PC-9 (cell line): ENCODE measurements at regions of chr11 and their contacts with region 1.

Region 1: GRCh38 chr11:17154409-17155159 is 53.2 kb downstream of the PIK3C2A start:
- DNase-seq: no peak
- H3K4me3 ChIP-seq: no peak overlapping the region
- H3K27ac ChIP-seq: no peak overlapping the region
- H3K4me1 ChIP-seq: no peaks in the 10 kb centered on the region
- H3K27me3 ChIP-seq: no peaks in the 10 kb centered on the region
- CTCF ChIP-seq: no peak

Region 2: GRCh38 chr11:16945671-16946469 is 208.7 kb before region 1 on chr11:
- CTCF ChIA-PET with region 1: no interaction called
- POLR2A ChIA-PET with region 1: interaction called, 10 read pairs
- intact Hi-C with region 1: no loop called
- DNase-seq: peak; percentile 58 to 73
- H3K4me3 ChIP-seq: no peak overlapping the region
- H3K27ac ChIP-seq: no peak overlapping the region; the same call in 1 of the 2 replicates
- H3K4me1 ChIP-seq: peaks cover 15% of the 10 kb centered on the region
- H3K27me3 ChIP-seq: no peaks in the 10 kb centered on the region
- CTCF ChIP-seq: peak; percentile 84

Region 3: GRCh38 chr11:17221968-17222367 is 67.4 kb after region 1 on chr11:
- CTCF ChIA-PET with region 1: no interaction called
- POLR2A ChIA-PET with region 1: no interaction called
- intact Hi-C with region 1: no loop called
- DNase-seq: peak in 1 of 2 experiments; percentile 40
- H3K4me3 ChIP-seq: no peak overlapping the region
- H3K27ac ChIP-seq: no peak overlapping the region
- H3K4me1 ChIP-seq: 0 out of 2 replicates have a peak, but pooled peaks cover 4% of the 10 kb centered on the region
- H3K27me3 ChIP-seq: no peaks in the 10 kb centered on the region
- CTCF ChIP-seq: no peak

Region 4: GRCh38 chr11:17347676-17348075 is 193.1 kb after region 1 on chr11:
- CTCF ChIA-PET with region 1: interaction called, 20 read pairs
- POLR2A ChIA-PET with region 1: no interaction called
- intact Hi-C with region 1: no loop called
- DNase-seq: no peak
- H3K4me3 ChIP-seq: no peak overlapping the region
- H3K27ac ChIP-seq: no peak overlapping the region
- H3K4me1 ChIP-seq: no peaks in the 10 kb centered on the region
- H3K27me3 ChIP-seq: no peaks in the 10 kb centered on the region
- CTCF ChIP-seq: no peak